Mammary epithelial cell (primary cell): ENCODE measurements at regions of chr5 and their contacts with region 1.

Region 1: GRCh38 chr5:169716278-169716677 is 79.2 kb downstream of the DOCK2 start:
- DNase-seq: peak; percentile 62
- H3K4me3 ChIP-seq: no peak overlapping the region
- H3K27ac ChIP-seq: peak overlapping the region; percentile 29
- H3K4me1 ChIP-seq: peaks cover 20% of the 10 kb centered on the region
- H3K27me3 ChIP-seq: no peaks in the 10 kb centered on the region
- CTCF ChIP-seq: no peak

Region 2: GRCh38 chr5:168916266-168916665 is 800.0 kb before region 1 on chr5:
- CTCF ChIA-PET with region 1: no interaction called
- dilution Hi-C with region 1: no loop called
- in situ Hi-C with region 1: no loop called
- intact Hi-C with region 1: no loop called
- DNase-seq: no peak
- H3K4me3 ChIP-seq: no peak overlapping the region
- H3K27ac ChIP-seq: no peak overlapping the region
- H3K4me1 ChIP-seq: peaks cover 2% of the 10 kb centered on the region
- H3K27me3 ChIP-seq: no peaks in the 10 kb centered on the region
- CTCF ChIP-seq: no peak

Region 3: GRCh38 chr5:169763376-169764017 is 47.2 kb after region 1 on chr5:
- CTCF ChIA-PET with region 1: no interaction called
- dilution Hi-C with region 1: no loop called
- in situ Hi-C with region 1: no loop called
- intact Hi-C with region 1: loop called (anchors 5 kb)
- DNase-seq: no peak
- H3K4me3 ChIP-seq: no peak overlapping the region
- H3K27ac ChIP-seq: no peak overlapping the region
- H3K4me1 ChIP-seq: peaks cover 35% of the 10 kb centered on the region
- H3K27me3 ChIP-seq: no peaks in the 10 kb centered on the region
- CTCF ChIP-seq: no peak